A549 (cell line): ENCODE measurements at regions of chr3 and their contacts with region 1.

Region 1: DNA sequence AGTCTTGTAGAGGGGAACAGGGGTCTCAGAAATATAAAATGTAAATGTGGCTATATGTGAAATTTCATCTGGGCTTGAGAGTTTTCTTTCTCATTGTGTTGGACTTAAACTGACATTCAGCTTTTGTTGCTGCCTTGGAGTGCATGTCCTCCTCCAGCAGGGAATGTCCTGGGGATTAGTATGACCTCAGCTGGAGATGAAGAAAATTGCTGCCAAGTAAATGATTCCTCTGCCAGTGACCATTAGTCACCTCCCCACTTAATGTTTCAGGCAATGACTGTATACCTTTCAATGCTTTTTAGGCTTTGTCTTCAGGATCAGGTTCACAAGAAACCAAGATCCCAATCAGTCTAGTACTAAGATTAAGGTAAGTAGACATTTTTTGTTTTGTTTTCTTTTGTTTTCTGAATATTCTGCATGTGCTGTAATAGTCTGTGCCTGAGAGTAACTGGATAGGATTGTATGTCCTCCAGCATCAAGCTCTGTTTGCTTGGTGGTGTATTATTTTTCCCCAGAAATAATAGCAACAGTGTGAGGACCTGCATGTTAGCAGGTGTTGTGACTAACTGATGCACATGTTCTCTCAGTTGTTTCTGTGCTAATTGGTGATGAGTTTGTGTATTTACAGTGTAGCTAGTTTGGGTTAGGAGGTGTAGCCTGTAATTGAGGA is 18.1 kb upstream of the SLC22A13 start:
- DNase-seq: peak; percentile 46 to 50
- ATAC-seq: peak; percentile 97 to 98
- H3K4me3 ChIP-seq: no peak overlapping the region
- H3K27ac ChIP-seq: no peak overlapping the region
- H3K4me1 ChIP-seq: peaks cover 19% of the 10 kb centered on the region
- CTCF ChIP-seq: peak; percentile 38; the same call in 2 of the 3 replicates
- EP300 ChIP-seq: no peak
- POLR2A ChIP-seq: no peak
- RAD21 ChIP-seq: peak; percentile 37 to 48; a peak in 4 of 5 replicates

Region 2: GRCh38 chr3:38131621-38132369 is 115.7 kb before region 1 on chr3:
- CTCF ChIA-PET with region 1: interaction called, 12 read pairs
- POLR2A ChIA-PET with region 1: interaction called, 6 read pairs
- DNase-seq: peak; percentile 44 to 53
- ATAC-seq: peak; percentile 54 to 86; a peak in 3 of 6 replicates
- H3K4me3 ChIP-seq: no peak overlapping the region
- H3K27ac ChIP-seq: no peak overlapping the region
- H3K4me1 ChIP-seq: peaks cover 20% of the 10 kb centered on the region
- CTCF ChIP-seq: peak; percentile 56
- EP300 ChIP-seq: no peak
- POLR2A ChIP-seq: no peak
- RAD21 ChIP-seq: peak; percentile 56 to 68

Region 3: DNA sequence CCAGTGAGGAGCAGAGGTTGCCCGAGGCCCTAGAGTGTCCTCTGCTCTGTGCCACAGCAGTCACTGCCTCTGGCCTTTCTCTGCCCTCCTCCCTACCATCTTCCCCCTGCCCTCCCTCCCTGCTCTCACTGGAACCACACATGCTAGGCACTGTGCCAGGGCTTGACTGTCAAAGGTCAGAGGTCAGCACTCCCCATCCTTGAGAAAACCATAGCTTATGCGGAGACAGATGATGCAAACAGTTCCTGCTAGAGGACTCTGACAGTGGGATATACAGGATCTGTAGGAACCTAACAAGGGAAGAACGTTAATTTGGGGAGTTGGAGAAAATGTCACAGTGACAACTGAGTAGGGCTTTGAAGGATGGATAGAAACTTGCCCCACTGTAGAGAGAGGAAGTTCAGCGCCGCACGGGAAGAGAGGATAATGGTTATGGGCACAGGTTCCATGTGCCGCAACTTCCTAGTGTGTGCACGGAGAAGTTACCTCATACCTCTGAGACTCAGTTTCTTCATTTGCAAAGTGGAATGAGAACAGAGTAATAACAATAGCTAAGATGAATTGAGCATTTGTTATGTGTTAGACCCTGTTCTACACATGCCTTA is 69.8 kb after region 1 on chr3:
- CTCF ChIA-PET with region 1: no interaction called
- POLR2A ChIA-PET with region 1: no interaction called
- DNase-seq: no peak
- ATAC-seq: no peak
- H3K4me3 ChIP-seq: no peak overlapping the region
- H3K27ac ChIP-seq: no peak overlapping the region
- H3K4me1 ChIP-seq: no peaks in the 10 kb centered on the region
- CTCF ChIP-seq: no peak
- EP300 ChIP-seq: no peak
- POLR2A ChIP-seq: no peak
- RAD21 ChIP-seq: no peak